Aorta (tissue), 5 donors: ENCODE measurements at regions of chr10 and their contacts with region 1.

Region 1: DNA sequence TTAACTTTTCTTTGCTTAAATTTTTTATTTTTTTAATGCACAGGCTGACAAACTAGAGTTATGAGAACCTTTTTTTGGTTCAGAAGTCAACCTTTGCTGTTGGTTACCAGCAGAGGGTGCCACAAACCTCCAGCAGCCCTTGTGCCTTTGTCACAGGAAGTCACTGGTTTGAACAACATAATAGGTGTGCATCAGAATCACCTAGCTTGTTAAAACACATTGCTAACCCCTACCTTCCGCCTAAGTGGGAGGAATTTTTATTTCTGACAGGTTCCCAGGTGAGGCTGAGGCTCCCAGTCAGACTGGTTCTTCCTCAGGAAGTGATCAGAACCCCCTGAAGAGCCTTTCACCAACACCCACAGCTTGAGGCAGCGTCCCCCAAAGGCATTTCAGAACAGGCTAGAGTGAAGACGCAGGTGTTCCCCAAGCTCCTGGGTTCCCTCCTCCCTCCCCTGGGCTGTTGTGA is 22.6 kb upstream of the VDAC2 start:
- DNase-seq: no peak
- ATAC-seq: no peak
- H3K4me3 ChIP-seq: no peak overlapping the region
- H3K27ac ChIP-seq: no peak overlapping the region
- H3K4me1 ChIP-seq: no peaks in the 10 kb centered on the region
- H3K27me3 ChIP-seq: no peaks in the 10 kb centered on the region

Region 2: GRCh38 chr10:75042292-75042974 is 145.6 kb before region 1 on chr10:
- intact Hi-C with region 1: no loop called
- DNase-seq: peak in 1 of 2 donors; percentile 46
- ATAC-seq: no peak
- H3K4me3 ChIP-seq: no peak overlapping the region
- H3K27ac ChIP-seq: no peak overlapping the region
- H3K4me1 ChIP-seq: no peaks in the 10 kb centered on the region
- H3K27me3 ChIP-seq: no peaks in the 10 kb centered on the region

Region 3: GRCh38 chr10:75111367-75111906 is 76.6 kb before region 1 on chr10 and contains the start of gene SAMD8:
- intact Hi-C with region 1: loop called in 1 of 2 experiments (anchors 5 kb)
- DNase-seq: peak; percentile 99
- ATAC-seq: peak; percentile 96
- H3K4me3 ChIP-seq: peak within 1 kb of the TSS; percentile 36 to 79
- H3K27ac ChIP-seq: peak within 1 kb of the TSS; percentile 84 to 88
- H3K4me1 ChIP-seq: peaks cover 0 to 4% of the 10 kb centered on the region in 2 donors
- H3K27me3 ChIP-seq: no peaks in the 10 kb centered on the region
- total RNA-seq, gene SAMD8: 33.6 to 37.5 TPM